ENCODE measurements at regions of chr9 and their contacts with region 1.

Region 1: DNA sequence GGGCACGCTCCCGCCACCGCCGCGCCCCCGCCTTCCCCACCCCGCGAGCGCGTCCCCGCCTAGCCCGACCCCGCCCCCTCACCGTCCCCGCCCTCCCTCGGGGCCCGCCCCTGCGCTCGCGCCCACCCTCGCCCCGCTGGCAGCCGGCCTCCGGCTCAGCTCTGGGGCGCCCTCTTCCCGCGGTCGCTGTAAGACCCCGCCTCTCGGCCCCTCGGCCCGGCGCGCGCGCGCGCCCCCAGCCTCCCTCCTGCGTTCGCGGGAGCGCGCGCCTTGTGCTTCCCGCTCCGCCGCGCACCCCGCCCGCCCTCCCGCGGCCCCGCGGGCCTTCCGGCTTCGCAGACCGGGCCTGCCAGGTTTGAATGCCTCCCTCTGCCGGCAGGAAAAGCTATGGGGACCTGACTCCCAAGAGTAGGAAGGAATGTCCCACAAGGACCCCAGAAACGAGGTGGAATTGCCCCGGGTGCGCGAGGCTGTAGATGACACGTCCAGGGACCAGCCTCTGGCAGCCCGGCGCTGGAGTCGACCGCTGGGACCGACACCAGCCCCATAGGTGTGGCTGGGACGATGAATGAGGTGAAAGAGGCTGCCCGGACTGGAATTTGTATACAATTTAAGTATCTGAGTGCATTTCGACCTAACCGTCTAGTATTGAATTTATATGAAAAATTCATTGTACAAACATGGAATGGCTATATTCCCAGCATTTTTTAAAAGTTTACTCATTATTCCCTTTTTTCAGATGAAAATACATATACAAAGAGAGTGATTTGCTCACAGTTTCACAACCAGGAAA is 416 bp upstream of the PTBP3 start:
- DNase-seq: peak; percentile 89 to 98 (median 94)
- ATAC-seq: peak; percentile 83
- H3K4me3 ChIP-seq: peak overlapping the region; percentile 87 to 99
- H3K4me3 Mint-ChIP-seq: peak overlapping the region; percentile 79
- H3K27ac ChIP-seq: peak overlapping the region; percentile 88 to 93
- H3K27ac Mint-ChIP-seq: peak overlapping the region; percentile 92
- H3K4me1 ChIP-seq: peaks cover 30% of the 10 kb centered on the region
- H3K4me1 Mint-ChIP-seq: peaks cover 38% of the 10 kb centered on the region
- H3K27me3 ChIP-seq: no peaks in the 10 kb centered on the region
- H3K27me3 Mint-ChIP-seq: no peaks in the 10 kb centered on the region
- CTCF ChIP-seq: peak; percentile 20

Region 2: GRCh38 chr9:111896353-111896958 is 437.4 kb before region 1 on chr9 and contains the start of gene UGCG:
- CTCF ChIA-PET with region 1: interaction called, 3 read pairs
- POLR2A ChIA-PET with region 1: interaction called, 8 read pairs
- intact Hi-C with region 1: loop called (anchors 1 kb)
- DNase-seq: peak; percentile 69 to 93 (median 84)
- ATAC-seq: peak; percentile 94
- H3K4me3 ChIP-seq: peak within 1 kb of the TSS; percentile 79 to 94
- H3K4me3 Mint-ChIP-seq: peak within 1 kb of the TSS; percentile 95
- H3K27ac ChIP-seq: peak within 1 kb of the TSS; percentile 62 to 71
- H3K27ac Mint-ChIP-seq: peak within 1 kb of the TSS; percentile 94
- H3K4me1 ChIP-seq: peaks cover 41% of the 10 kb centered on the region
- H3K4me1 Mint-ChIP-seq: peaks cover 19% of the 10 kb centered on the region
- H3K27me3 ChIP-seq: no peaks in the 10 kb centered on the region
- H3K27me3 Mint-ChIP-seq: no peaks in the 10 kb centered on the region
- CTCF ChIP-seq: no peak
- total RNA-seq, gene UGCG: 34.0 to 35.5 TPM

Region 3: DNA sequence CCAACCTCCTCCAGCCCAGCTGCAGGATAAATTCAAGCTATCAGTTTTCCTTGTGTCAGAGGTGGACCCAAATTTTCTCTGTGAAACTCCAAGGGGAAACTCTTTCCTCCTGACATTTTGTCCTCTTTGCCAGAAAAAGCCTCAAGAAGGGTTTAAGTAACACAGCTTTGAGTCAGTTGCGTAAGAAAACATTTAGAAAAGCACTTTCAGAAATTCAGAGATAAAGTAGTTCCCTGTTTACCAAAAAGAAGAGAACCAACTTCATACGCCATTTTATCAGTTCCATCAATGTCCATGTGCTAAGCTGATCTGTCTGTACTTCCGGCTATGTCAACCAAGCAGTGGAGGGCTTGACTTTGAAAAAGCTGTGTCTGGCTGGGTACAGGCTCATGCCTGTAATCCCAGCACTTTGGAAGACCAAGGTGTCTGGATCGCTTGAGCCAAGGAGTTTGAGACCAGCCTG is 138.8 kb before region 1 on chr9:
- CTCF ChIA-PET with region 1: no interaction called
- POLR2A ChIA-PET with region 1: no interaction called
- intact Hi-C with region 1: no loop called
- DNase-seq: no peak
- ATAC-seq: no peak
- H3K4me3 ChIP-seq: no peak overlapping the region
- H3K4me3 Mint-ChIP-seq: no peak overlapping the region
- H3K27ac ChIP-seq: no peak overlapping the region
- H3K27ac Mint-ChIP-seq: no peak overlapping the region
- H3K4me1 ChIP-seq: no peaks in the 10 kb centered on the region
- H3K4me1 Mint-ChIP-seq: no peaks in the 10 kb centered on the region
- H3K27me3 ChIP-seq: no peaks in the 10 kb centered on the region
- H3K27me3 Mint-ChIP-seq: no peaks in the 10 kb centered on the region
- CTCF ChIP-seq: no peak

Region 4: DNA sequence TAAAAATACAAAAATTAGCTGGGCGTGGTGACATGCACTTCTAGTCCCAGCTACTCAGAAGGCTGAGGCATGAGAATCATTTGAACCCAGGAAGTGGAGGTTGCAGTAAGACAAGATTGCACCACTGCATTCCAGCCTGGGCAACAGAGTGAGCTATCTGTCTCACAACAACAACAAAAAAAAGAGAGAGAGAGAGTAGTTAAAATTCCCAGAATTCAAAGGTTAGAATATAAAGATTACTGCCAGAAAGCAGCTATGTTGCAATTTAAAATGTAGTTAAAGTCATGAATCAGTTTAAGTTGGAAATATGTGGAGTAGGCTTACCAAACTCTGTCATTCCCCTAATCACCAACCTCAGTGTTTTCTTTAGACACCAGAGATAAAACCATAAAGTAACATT is 100.1 kb before region 1 on chr9:
- CTCF ChIA-PET with region 1: no interaction called
- POLR2A ChIA-PET with region 1: no interaction called
- intact Hi-C with region 1: loop called (anchors 5 to 10 kb)
- DNase-seq: no peak
- ATAC-seq: no peak
- H3K4me3 ChIP-seq: no peak overlapping the region
- H3K4me3 Mint-ChIP-seq: no peak overlapping the region
- H3K27ac ChIP-seq: no peak overlapping the region
- H3K27ac Mint-ChIP-seq: no peak overlapping the region
- H3K4me1 ChIP-seq: no peaks in the 10 kb centered on the region
- H3K4me1 Mint-ChIP-seq: peaks cover 3% of the 10 kb centered on the region
- H3K27me3 ChIP-seq: no peaks in the 10 kb centered on the region
- H3K27me3 Mint-ChIP-seq: no peaks in the 10 kb centered on the region
- CTCF ChIP-seq: no peak

Region 5: GRCh38 chr9:112315331-112316257 is 18.2 kb before region 1 on chr9:
- CTCF ChIA-PET with region 1: no interaction called
- POLR2A ChIA-PET with region 1: interaction called, 3 read pairs
- intact Hi-C with region 1: loop called in 1 of 2 experiments (anchors 2 kb)
- DNase-seq: no peak
- ATAC-seq: no peak
- H3K4me3 ChIP-seq: no peak overlapping the region
- H3K4me3 Mint-ChIP-seq: no peak overlapping the region
- H3K27ac ChIP-seq: no peak overlapping the region
- H3K27ac Mint-ChIP-seq: no peak overlapping the region
- H3K4me1 ChIP-seq: peaks cover 31% of the 10 kb centered on the region
- H3K4me1 Mint-ChIP-seq: peaks cover 74% of the 10 kb centered on the region
- H3K27me3 ChIP-seq: no peaks in the 10 kb centered on the region
- H3K27me3 Mint-ChIP-seq: no peaks in the 10 kb centered on the region
- CTCF ChIP-seq: no peak

Region 6: DNA sequence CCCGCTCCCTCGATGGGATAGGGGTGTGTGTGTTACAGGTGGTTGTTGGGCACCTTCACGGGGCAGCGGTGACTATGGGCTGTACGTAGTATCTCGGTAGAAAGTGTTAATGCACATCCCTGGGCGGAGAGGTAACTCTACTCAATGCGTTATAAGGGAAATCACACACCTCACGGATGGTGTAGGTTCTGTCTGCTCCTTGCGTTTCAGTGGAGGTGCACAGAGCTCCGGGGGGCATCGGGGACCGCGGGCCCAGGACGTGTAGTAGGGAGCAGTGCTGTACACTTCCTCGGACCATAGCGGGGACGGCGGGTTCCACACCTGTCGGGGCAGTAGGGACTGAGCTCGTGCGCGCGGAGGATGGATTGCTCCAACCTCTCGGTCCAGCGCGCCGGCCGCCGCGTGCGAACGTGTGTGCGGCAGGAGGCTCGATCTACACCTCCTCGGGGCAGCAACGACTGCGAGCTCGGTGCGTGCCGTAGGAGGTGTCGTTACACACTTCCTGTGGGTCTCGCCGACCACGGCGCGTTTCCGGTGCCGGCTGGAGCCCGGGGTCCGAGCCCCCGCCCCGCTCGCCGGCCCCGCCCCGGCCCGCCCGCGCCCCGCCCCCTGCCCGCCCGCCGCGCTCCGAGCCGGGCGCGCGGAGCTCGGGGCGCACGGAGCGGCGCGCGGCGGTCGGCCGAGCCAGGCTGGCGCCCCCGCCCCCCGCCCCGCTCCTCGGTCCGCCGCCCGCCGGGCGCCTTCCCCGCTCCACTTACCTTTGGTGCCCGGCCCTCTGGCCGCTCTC is 152.6 kb after region 1 on chr9 and contains the start of gene KIAA1958:
- CTCF ChIA-PET with region 1: no interaction called
- POLR2A ChIA-PET with region 1: interaction called, 4 read pairs
- intact Hi-C with region 1: loop called (anchors 2 kb)
- DNase-seq: peak; percentile 50 to 91 (median 81)
- ATAC-seq: peak; percentile 74
- H3K4me3 ChIP-seq: peak within 1 kb of the TSS; percentile 77 to 81
- H3K4me3 Mint-ChIP-seq: peak within 1 kb of the TSS; percentile 97
- H3K27ac ChIP-seq: peak within 1 kb of the TSS; percentile 77 to 78
- H3K27ac Mint-ChIP-seq: peak within 1 kb of the TSS; percentile 94
- H3K4me1 ChIP-seq: peaks cover 12% of the 10 kb centered on the region
- H3K4me1 Mint-ChIP-seq: peaks cover 42% of the 10 kb centered on the region
- H3K27me3 ChIP-seq: no peaks in the 10 kb centered on the region
- H3K27me3 Mint-ChIP-seq: no peaks in the 10 kb centered on the region
- CTCF ChIP-seq: no peak
- total RNA-seq, gene KIAA1958: 7.2 to 7.5 TPM

Region 7: GRCh38 chr9:112586599-112587155 is 252.8 kb after region 1 on chr9:
- CTCF ChIA-PET with region 1: no interaction called
- POLR2A ChIA-PET with region 1: no interaction called
- intact Hi-C with region 1: no loop called
- DNase-seq: no peak
- ATAC-seq: no peak
- H3K4me3 ChIP-seq: no peak overlapping the region
- H3K4me3 Mint-ChIP-seq: no peak overlapping the region
- H3K27ac ChIP-seq: no peak overlapping the region
- H3K27ac Mint-ChIP-seq: no peak overlapping the region
- H3K4me1 ChIP-seq: no peaks in the 10 kb centered on the region
- H3K4me1 Mint-ChIP-seq: no peaks in the 10 kb centered on the region
- H3K27me3 ChIP-seq: no peaks in the 10 kb centered on the region
- H3K27me3 Mint-ChIP-seq: no peaks in the 10 kb centered on the region
- CTCF ChIP-seq: no peak

Region 8: DNA sequence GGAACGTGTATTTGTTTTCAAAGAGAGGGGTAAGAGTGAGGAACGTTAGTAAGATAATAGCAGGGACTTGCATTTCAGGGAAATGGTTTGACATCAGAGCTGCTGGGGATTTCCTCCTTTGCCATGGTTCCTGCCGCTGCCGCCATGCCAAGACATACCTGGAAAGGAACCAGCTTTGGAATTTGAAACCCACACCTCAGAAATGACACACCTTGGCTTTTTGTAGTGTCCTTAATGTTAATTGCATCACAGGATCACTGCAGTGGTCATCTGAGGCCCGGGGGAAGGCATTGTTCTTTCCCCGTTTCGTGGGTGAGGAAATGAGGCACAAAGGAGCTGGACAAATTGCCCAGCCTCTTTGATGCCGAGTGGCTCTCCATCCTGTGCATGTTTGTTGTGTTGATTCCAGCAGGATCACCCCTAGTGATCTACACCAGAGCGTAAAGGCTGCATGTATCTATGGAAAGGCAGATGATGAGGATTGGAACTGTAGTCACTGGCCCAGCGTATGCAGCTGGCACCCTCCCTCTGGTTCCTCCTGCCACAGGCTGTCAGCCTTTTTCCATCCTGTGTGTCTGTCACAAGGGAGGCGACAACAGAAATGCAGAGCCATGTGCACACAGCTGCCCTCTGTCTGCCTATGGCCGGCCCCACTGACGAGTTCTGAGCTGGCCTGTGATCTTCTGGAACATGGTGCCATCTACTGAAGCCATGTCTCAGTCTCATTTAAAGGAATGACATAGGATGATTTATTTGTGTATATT is 519.1 kb after region 1 on chr9:
- CTCF ChIA-PET with region 1: no interaction called
- POLR2A ChIA-PET with region 1: no interaction called
- intact Hi-C with region 1: no loop called
- DNase-seq: no peak
- ATAC-seq: no peak
- H3K4me3 ChIP-seq: no peak overlapping the region
- H3K4me3 Mint-ChIP-seq: no peak overlapping the region
- H3K27ac ChIP-seq: no peak overlapping the region
- H3K27ac Mint-ChIP-seq: no peak overlapping the region
- H3K4me1 ChIP-seq: no peaks in the 10 kb centered on the region
- H3K4me1 Mint-ChIP-seq: peaks cover 2% of the 10 kb centered on the region
- H3K27me3 ChIP-seq: no peaks in the 10 kb centered on the region
- H3K27me3 Mint-ChIP-seq: no peaks in the 10 kb centered on the region
- CTCF ChIP-seq: no peak

Region 9: DNA sequence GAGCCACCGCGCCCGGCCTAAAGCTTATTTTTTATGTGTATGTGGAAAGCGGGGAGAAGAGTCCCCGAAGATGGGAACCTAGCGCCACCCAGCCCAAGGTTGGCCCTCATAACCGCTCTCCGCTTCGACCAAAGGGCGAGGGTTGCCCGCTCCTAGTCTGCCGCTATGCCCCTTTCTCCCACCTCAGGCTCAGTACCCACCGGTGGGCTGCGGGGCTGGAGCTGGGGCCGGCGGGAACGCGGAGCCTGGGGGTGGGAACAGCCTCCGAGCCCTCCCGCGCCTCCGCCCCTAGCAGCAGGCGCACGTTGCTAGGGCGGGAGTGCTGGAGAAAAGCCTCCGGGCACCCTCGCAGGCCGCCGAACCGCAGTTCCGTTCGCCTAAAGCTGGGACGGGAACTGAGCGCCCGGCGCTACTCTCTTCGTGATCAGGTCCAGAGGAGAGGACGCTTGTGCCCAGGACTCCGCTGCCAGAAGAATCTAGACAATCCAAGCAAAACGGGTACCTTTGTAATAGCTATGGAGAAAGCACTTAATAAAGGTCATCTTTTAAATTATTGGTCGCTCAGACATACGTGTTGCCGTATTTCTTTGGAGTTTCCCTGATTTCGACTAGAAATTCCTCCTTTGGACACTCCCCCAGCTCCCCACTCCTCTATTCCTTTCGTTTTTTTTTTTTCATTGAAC is 1006.3 kb after region 1 on chr9 and contains the start of gene WDR31:
- CTCF ChIA-PET with region 1: no interaction called
- POLR2A ChIA-PET with region 1: no interaction called
- intact Hi-C with region 1: loop called in 1 of 2 experiments (anchors 5 kb)
- DNase-seq: peak; percentile 58 to 90 (median 78)
- ATAC-seq: peak; percentile 99
- H3K4me3 ChIP-seq: peak within 1 kb of the TSS; percentile 70 to 83
- H3K4me3 Mint-ChIP-seq: peak within 1 kb of the TSS; percentile 83
- H3K27ac ChIP-seq: peak within 1 kb of the TSS in 1 of 2 experiments; percentile 46
- H3K27ac Mint-ChIP-seq: no peak within 1 kb of the TSS
- H3K4me1 ChIP-seq: peaks cover 19% of the 10 kb centered on the region
- H3K4me1 Mint-ChIP-seq: peaks cover 24% of the 10 kb centered on the region
- H3K27me3 ChIP-seq: peaks cover 0 to 3% of the 10 kb centered on the region in 2 experiments
- H3K27me3 Mint-ChIP-seq: peaks cover 2% of the 10 kb centered on the region
- CTCF ChIP-seq: no peak
- total RNA-seq, gene WDR31: 0.11 to 0.43 TPM

Measured in CD8-positive, alpha-beta T cell (primary cell).